GM18951 (cell line): ENCODE measurements at regions of chr3 and their contacts with region 1.

Region 1: DNA sequence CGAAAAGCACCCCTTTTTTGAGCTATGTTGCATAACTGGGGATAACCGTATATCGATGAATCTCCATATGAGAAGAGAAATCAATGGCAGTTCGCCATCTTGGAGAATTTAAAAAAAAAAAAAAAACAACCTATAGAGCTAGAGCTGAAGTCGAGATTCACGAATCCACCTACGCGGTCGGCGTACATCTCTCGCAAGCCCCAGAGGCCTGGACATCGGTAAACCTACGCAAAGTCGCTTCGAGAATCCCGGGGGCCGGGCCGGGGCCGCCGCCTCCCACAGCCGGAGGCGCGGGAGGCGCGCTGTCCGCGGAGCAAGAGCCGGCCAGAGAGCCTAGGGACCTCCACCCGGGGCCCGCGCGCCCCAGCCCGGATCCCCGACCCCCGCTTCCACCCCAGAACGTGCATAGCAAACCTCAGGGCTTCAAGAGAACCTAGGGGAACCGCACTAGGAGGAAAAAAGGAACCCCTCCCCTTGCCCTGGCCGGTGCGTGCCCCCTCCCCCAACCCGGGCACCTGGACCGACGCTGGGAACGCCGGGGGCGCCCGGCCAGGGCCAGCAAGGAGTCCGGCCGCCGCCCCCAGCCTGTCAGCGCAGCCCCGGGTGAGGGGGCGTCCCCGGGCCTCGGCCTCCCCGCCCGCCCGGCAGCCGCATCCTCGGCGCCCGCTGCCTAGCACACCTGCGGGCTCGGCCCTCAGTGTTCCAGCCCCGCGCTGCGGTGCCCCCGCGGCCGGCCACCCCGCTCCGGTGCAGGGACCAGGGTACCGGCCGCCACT is 567 bp downstream of the PFN2 start:
- POLR2A ChIP-seq: no peak

Region 2: GRCh38 chr3:150183678-150184425 is 213.7 kb after region 1 on chr3:
- in situ Hi-C with region 1: loop called (anchors 10 kb)
- POLR2A ChIP-seq: no peak